ENCODE measurements at regions of chr16 and their contacts with region 1.

Region 1: GRCh38 chr16:12067714-12068401 is 91.3 kb downstream of the SNX29 start:
- DNase-seq: peak; percentile 65 to 74 (median 70)
- ATAC-seq: peak; percentile 69
- H3K4me3 ChIP-seq: no peak overlapping the region
- H3K27ac ChIP-seq: no peak overlapping the region
- H3K4me1 ChIP-seq: no peaks in the 10 kb centered on the region
- H3K27me3 ChIP-seq: no peaks in the 10 kb centered on the region
- CTCF ChIP-seq: peak; percentile 90 to 93 (median 93)
- POLR2A ChIP-seq: no peak

Region 2: DNA sequence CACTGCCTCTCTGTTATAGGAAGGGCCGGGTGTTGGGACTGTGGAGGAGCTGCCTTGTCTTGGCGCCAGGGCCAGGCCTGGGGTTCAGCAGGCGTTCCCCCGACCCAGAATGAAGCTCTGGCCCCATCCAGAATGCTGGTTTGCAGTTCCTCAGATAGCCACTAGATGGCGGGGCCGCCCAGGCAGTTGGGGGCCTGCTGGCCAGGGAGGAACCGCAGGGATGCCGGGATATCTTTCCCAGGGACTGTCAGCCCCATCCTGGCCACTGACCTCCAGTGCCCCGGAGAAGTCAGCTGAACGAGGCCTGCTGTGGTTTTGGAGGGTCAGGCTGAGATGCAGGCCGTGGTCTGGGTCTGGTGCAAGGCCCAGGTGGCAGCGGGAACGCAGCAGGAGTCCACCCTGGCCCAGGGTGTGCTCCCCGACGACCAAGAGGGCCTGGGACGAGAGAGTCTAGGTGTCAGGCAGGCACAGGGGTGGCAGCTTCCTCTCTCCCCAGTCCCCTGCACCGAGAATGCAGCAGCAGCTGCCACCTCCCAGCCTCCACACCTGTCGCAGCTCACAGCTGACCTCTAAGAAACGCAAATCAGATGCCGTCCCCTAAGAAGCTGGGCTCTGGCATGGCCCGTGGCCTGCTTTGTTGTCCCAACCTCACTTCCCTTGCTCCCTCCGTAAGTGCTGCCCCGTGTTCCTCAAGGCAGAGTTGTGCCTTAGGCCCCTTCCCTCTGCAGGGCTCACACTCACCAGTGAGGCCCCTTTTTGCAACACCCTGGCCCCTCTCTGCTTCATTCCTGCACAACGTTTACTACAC is 671.4 kb before region 1 on chr16:
- intact Hi-C with region 1: loop called (anchors 5 kb)
- DNase-seq: peak; percentile 65 to 78 (median 76)
- ATAC-seq: peak; percentile 59
- H3K4me3 ChIP-seq: no peak overlapping the region
- H3K27ac ChIP-seq: no peak overlapping the region
- H3K4me1 ChIP-seq: peaks cover 17% of the 10 kb centered on the region
- H3K27me3 ChIP-seq: no peaks in the 10 kb centered on the region
- CTCF ChIP-seq: peak; percentile 93 to 98 (median 96)
- POLR2A ChIP-seq: no peak

Region 3: GRCh38 chr16:11915114-11915643 is 152.7 kb before region 1 on chr16:
- intact Hi-C with region 1: no loop called
- DNase-seq: peak; percentile 36 to 51 (median 42)
- ATAC-seq: peak; percentile 18
- H3K4me3 ChIP-seq: peak overlapping the region; percentile 61 to 88
- H3K27ac ChIP-seq: peak overlapping the region; percentile 83 to 97 (median 91)
- H3K4me1 ChIP-seq: peaks cover 52% of the 10 kb centered on the region
- H3K27me3 ChIP-seq: no peaks in the 10 kb centered on the region
- CTCF ChIP-seq: no peak
- POLR2A ChIP-seq: no peak

Measured in body of pancreas (tissue), 4 donors.